Left colon (tissue), 2 donors: ENCODE measurements at regions of chr9 and their contacts with region 1.

Region 1: GRCh38 chr9:127205183-127205470 is 59.4 kb upstream of the GARNL3 start:
- DNase-seq: peak in 1 of 2 donors; percentile 12
- ATAC-seq: no peak

Region 2: DNA sequence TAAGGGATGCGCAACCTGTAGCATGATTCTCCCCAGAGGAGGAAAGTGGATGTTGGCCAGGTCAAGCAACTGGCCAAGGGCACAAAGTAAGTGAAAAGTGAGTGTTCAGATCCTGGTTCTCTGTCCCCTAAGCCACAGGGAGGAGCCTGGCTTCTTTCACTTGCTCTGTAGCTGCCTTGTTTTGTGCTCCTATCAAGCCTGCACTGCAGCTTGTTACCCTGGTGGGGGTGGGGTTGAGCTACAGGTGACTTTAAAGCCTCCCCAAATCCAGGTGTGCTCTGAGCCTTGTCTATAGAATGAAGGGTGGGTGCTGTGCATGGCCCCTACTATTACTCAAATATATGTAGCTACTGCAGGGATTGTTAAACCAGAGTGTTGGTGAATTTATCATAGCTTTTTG is 257.6 kb before region 1 on chr9:
- intact Hi-C with region 1: loop called in 1 of 2 experiments (anchors 10 kb)
- DNase-seq: no peak
- ATAC-seq: no peak

Region 3: GRCh38 chr9:126980231-126980630 is 224.9 kb before region 1 on chr9:
- intact Hi-C with region 1: no loop called
- DNase-seq: no peak
- ATAC-seq: no peak

Region 4: GRCh38 chr9:127267793-127268525 is 62.8 kb after region 1 on chr9:
- intact Hi-C with region 1: no loop called
- DNase-seq: no peak
- ATAC-seq: no peak